Tibial artery (tissue), 4 donors: ENCODE measurements at regions of chr6 and their contacts with region 1.

Region 1: GRCh38 chr6:11595903-11596302 is 58.4 kb downstream of the TMEM170B start:
- DNase-seq: no peak
- H3K4me3 ChIP-seq: no peak overlapping the region
- H3K27ac ChIP-seq: no peak overlapping the region
- H3K4me1 ChIP-seq: peaks cover 0 to 14% (median 5%) of the 10 kb centered on the region in 4 donors
- H3K27me3 ChIP-seq: no peaks in the 10 kb centered on the region
- CTCF ChIP-seq: no peak

Region 2: DNA sequence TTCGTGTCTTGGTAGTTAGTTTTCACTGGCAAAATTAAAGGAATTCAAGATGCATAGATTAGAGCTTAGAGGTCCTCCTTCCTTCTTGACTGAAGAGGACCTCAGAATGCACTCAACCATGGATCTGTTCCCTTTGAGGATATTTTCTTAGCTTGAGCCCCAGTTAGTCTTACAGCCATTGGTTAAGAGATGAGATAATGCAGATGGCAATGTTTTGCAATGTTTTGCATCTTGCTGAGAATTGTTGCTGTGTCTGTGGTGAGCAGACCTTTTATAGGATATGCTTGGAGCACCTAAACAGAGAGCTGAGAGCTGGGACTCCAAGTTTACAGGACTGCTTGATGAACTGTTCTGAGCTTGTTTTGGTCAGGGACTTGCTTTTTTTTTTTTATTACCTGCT is 49.1 kb after region 1 on chr6:
- intact Hi-C with region 1: loop called (anchors 10 kb)
- DNase-seq: no peak
- H3K4me3 ChIP-seq: no peak overlapping the region
- H3K27ac ChIP-seq: no peak overlapping the region
- H3K4me1 ChIP-seq: peaks cover 0 to 32% (median 8%) of the 10 kb centered on the region in 4 donors
- H3K27me3 ChIP-seq: no peaks in the 10 kb centered on the region
- CTCF ChIP-seq: no peak